Mammary epithelial cell (primary cell): ENCODE measurements at regions of chr6 and their contacts with region 1.

Region 1: GRCh38 chr6:29942275-29943052 is at the start of gene HLA-A:
- DNase-seq: peak; percentile 97
- H3K4me3 ChIP-seq: peak within 1 kb of the TSS; percentile 65 to 84 (median 75)
- H3K27ac ChIP-seq: peak within 1 kb of the TSS; percentile 93
- H3K4me1 ChIP-seq: peaks cover 8% of the 10 kb centered on the region
- H3K27me3 ChIP-seq: no peaks in the 10 kb centered on the region
- CTCF ChIP-seq: peak in 1 of 2 donors; percentile 13
- total RNA-seq, gene HLA-A: 217 to 345 TPM

Region 2: DNA sequence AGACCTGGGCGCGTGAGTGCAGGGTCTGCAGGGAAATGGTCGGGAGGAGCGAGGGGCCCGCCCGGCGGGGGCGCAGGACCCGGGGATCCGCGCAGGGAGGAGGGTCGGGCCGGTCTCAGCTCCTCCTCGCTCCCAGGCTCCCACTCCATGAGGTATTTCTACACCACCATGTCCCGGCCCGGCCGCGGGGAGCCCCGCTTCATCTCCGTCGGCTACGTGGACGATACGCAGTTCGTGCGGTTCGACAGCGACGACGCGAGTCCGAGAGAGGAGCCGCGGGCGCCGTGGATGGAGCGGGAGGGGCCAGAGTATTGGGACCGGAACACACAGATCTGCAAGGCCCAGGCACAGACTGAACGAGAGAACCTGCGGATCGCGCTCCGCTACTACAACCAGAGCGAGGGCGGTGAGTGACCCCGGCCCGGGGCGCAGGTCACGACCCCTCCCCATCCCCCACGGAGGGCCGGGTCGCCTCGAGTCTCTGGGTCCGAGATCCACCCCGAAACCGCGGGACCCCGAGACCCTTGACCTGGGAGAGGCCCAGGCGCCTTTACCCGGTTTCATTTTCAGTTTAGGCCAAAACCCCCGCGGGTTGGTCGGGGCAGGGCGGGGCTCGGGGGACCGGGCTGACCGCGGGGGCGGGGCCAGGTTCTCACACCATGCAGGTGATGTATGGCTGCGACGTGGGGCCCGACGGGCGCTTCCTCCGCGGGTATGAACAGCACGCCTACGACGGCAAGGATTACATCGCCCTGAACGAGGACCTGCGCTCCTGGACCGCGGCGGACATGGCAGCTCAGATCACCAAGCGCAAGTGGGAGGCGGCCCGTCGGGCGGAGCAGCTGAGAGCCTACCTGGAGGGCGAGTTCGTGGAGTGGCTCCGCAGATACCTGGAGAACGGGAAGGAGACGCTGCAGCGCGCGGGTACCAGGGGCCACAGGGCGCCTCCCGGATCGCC is 54.4 kb before region 1 on chr6:
- CTCF ChIA-PET with region 1: no interaction called
- dilution Hi-C with region 1: no loop called
- in situ Hi-C with region 1: no loop called
- intact Hi-C with region 1: loop called (anchors 5 kb)
- DNase-seq: peak; percentile 61
- H3K4me3 ChIP-seq: peak overlapping the region; percentile 64 to 71 (median 67)
- H3K27ac ChIP-seq: peak overlapping the region; percentile 89
- H3K4me1 ChIP-seq: peaks cover 7% of the 10 kb centered on the region
- H3K27me3 ChIP-seq: no peaks in the 10 kb centered on the region
- CTCF ChIP-seq: no peak

Region 3: DNA sequence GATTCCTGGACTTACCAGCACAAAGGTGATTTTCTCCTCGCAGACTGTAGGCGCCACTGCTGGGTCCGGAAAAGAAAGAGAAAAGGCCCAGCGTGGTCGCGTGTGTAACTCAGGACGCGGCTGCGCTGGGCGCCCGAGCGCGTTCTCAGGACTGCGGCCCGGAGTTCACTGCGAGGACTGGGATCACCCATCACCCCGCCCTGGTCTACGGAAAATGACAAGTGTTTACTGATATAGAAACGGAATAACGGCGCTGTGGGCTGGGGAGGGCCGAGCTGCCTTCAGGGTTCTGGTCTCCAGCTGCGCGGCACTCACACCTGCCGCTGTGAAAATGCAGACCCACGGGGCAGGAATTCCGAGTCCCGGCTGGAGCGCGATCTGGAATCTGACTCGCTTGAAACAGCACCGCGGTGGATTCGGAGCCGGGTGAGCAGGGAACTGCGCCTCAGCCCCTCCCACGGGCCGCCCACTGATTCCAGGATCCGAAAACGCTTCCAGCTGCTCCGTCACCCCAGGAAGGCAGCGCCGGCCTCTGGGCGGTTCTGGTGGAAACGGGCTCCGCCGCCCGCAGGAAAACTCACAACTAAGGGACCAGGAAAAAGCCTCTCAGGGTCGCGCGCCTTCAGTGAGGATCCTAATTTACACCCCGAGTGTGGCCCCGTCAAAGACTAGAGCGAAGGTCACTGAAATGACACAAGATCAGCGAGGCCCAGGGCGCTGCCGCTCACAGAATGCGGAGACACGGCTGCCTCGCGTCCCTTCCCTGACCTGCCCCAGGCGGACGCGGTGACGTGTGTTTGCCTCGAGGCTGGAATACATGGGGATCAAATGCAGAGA is 34.3 kb after region 1 on chr6:
- CTCF ChIA-PET with region 1: no interaction called
- dilution Hi-C with region 1: no loop called
- in situ Hi-C with region 1: no loop called
- intact Hi-C with region 1: loop called (anchors 1 kb)
- DNase-seq: peak; percentile 70
- H3K4me3 ChIP-seq: peak overlapping the region; percentile 42 to 48 (median 47)
- H3K27ac ChIP-seq: peak overlapping the region; percentile 32
- H3K4me1 ChIP-seq: peaks cover 4% of the 10 kb centered on the region
- H3K27me3 ChIP-seq: peaks cover 3% of the 10 kb centered on the region
- CTCF ChIP-seq: peak in 1 of 2 donors; percentile 60